Activated T-helper 2 cell treated with anti-CD3 and anti-CD28 coated beads, Interferon-gamma antibody, Interleukin-2, Interleukin-4, amounts not matched to agents 10 μg/mL and 5 μg/mL and 100 μg/mL, durations not matched to agents 14 hours and 24 hours and 36 hours (primary cell): ENCODE measurements at regions of chr21 and their contacts with region 1.

Region 1: GRCh38 chr21:42524349-42525151 is 10.9 kb downstream of the SLC37A1 start:
- DNase-seq: no peak
- H3K4me3 Mint-ChIP-seq: no peak overlapping the region
- H3K27ac Mint-ChIP-seq: no peak overlapping the region
- H3K4me1 Mint-ChIP-seq: peaks cover 40% of the 10 kb centered on the region
- H3K27me3 Mint-ChIP-seq: no peaks in the 10 kb centered on the region

Region 2: GRCh38 chr21:42233067-42233961 is 291.2 kb before region 1 on chr21:
- intact Hi-C with region 1: loop called (anchors 10 kb)
- DNase-seq: peak; percentile 77
- H3K4me3 Mint-ChIP-seq: peak overlapping the region; percentile 63
- H3K27ac Mint-ChIP-seq: peak overlapping the region; percentile 93
- H3K4me1 Mint-ChIP-seq: peaks cover 85% of the 10 kb centered on the region
- H3K27me3 Mint-ChIP-seq: no peaks in the 10 kb centered on the region

Region 3: GRCh38 chr21:42467140-42467983 is 57.2 kb before region 1 on chr21:
- intact Hi-C with region 1: loop called (anchors 5 kb)
- DNase-seq: no peak
- H3K4me3 Mint-ChIP-seq: no peak overlapping the region
- H3K27ac Mint-ChIP-seq: no peak overlapping the region
- H3K4me1 Mint-ChIP-seq: peaks cover 45% of the 10 kb centered on the region
- H3K27me3 Mint-ChIP-seq: peaks cover 1% of the 10 kb centered on the region

Region 4: GRCh38 chr21:42496122-42496900 is 28.2 kb before region 1 on chr21 and contains the start of gene RSPH1:
- intact Hi-C with region 1: loop called (anchors 1 kb)
- DNase-seq: peak; percentile 99
- H3K4me3 Mint-ChIP-seq: peak within 1 kb of the TSS; percentile 89
- H3K27ac Mint-ChIP-seq: peak within 1 kb of the TSS; percentile 62
- H3K4me1 Mint-ChIP-seq: peaks cover 24% of the 10 kb centered on the region
- H3K27me3 Mint-ChIP-seq: peaks cover 20% of the 10 kb centered on the region
- total RNA-seq, gene RSPH1: not detected in 2 replicates

Region 5: GRCh38 chr21:42513985-42514882 is 10.3 kb before region 1 on chr21:
- intact Hi-C with region 1: loop called (anchors 2 kb)
- DNase-seq: peak; percentile 43
- H3K4me3 Mint-ChIP-seq: peak overlapping the region; percentile 78
- H3K27ac Mint-ChIP-seq: peak overlapping the region; percentile 49
- H3K4me1 Mint-ChIP-seq: peaks cover 13% of the 10 kb centered on the region
- H3K27me3 Mint-ChIP-seq: peaks cover 16% of the 10 kb centered on the region

Region 6: DNA sequence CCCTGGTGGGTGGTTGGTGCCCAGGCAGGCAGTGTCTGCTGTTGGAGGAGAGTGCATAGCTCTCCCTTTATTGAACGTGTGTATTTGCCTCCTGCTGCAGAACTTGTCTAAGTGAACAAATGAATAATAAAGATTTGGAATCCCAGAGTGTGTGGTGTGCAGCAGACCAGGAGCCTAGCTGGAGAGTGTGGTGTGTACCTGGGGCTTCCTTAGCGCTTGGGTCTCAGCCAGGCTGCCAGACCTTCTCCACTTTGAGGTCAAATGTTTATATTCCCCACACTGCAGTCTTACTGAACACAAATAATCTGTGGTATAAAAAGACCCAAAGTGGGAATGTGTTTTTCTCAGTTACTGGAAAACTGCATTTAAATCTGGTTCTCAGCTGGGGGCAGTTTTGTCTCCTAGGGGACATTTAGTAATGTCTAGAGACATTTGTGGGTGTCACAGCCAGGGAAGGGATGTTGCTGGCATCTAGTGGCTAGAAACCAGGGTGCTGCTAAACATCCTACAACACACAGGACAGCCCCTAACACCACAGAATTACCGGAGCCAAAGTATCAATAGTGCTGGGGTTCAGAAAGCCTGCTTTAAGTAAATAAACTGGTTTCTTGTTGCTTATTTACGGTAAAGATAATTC is 12.7 kb after region 1 on chr21:
- intact Hi-C with region 1: no loop called
- DNase-seq: no peak
- H3K4me3 Mint-ChIP-seq: no peak overlapping the region
- H3K27ac Mint-ChIP-seq: no peak overlapping the region
- H3K4me1 Mint-ChIP-seq: peaks cover 4% of the 10 kb centered on the region
- H3K27me3 Mint-ChIP-seq: no peaks in the 10 kb centered on the region

Region 7: GRCh38 chr21:42695697-42696380 is 171.3 kb after region 1 on chr21:
- intact Hi-C with region 1: no loop called
- DNase-seq: no peak
- H3K4me3 Mint-ChIP-seq: no peak overlapping the region
- H3K27ac Mint-ChIP-seq: no peak overlapping the region
- H3K4me1 Mint-ChIP-seq: no peaks in the 10 kb centered on the region
- H3K27me3 Mint-ChIP-seq: no peaks in the 10 kb centered on the region